Cardiac septum (tissue), 1 donor: ENCODE measurements at regions of chr1 and their contacts with region 1.

Region 1: DNA sequence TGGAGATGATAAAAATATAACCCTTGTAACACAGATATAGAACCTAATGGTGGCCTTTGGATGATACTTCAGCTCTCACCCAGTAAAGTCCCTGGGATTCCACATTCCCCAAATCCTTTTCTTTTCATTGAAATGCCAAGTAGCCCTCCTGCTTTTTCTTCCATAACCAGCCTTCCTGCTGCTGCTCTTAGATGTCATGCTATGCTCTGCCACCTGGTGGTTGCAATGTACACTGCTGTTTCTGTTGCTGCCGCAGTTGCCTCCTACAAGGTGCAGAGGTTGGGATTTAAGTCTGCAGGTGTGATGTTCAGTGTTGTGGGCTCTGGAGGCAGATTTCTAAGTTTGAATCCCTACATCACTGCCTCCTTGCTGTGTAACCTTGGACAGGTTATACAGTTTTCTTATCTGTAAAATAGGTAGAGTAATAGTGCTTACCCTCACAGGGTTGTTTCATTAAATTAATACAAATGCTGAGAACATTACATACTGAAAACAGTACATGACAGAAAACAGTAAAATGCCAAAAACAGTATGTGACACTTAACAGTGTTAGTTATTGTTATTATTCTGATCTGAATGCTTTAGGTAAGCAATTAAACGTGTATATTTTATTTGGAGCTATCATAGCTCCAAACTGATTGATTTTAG is 64.3 kb downstream of the CAMSAP2 start:
- DNase-seq: peak; percentile 83

Region 2: DNA sequence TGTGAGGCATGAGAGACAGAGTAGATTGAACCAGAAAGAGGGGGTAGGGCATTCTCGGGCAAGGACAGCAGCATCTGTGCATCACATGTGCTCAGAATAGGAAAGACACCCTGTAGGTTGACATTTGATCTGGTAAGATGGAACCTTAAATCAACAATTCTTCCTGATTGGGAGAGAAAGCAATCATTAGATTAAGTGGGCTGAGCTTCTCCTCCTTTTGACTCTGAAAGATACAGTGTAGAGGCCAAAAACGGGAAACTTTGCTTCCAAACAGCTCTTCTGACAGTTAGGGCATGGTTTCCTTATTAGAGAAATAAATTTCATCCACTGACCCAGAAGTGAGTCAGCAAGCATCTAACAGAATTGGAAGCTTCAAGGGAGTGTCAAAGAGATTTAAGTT is 192.1 kb before region 1 on chr1:
- intact Hi-C with region 1: no loop called
- DNase-seq: no peak

Region 3: GRCh38 chr1:200669314-200670241 is 133.4 kb before region 1 on chr1 and contains the start of gene DDX59:
- intact Hi-C with region 1: loop called (anchors 2 kb)
- DNase-seq: peak; percentile 97
- total RNA-seq, gene DDX59: 17.3 TPM